ENCODE measurements at regions of chr16 and their contacts with region 1.

Region 1: GRCh38 chr16:10876799-10877341 is at the start of gene CIITA:
- DNase-seq: peak; percentile 97
- ATAC-seq: peak; percentile 56
- H3K4me3 ChIP-seq: peak within 1 kb of the TSS; percentile 78
- H3K27ac ChIP-seq: peak within 1 kb of the TSS; percentile 94
- H3K4me1 ChIP-seq: peaks cover 40% of the 10 kb centered on the region
- H3K27me3 ChIP-seq: no peaks in the 10 kb centered on the region
- CTCF ChIP-seq: no peak
- EP300 ChIP-seq: peak; percentile 28 to 85; a peak in 3 of 4 replicates
- POLR2A ChIP-seq: peak; percentile 86
- RAD21 ChIP-seq: peak; percentile 32; the same call in 1 of the 2 replicates
- polyA plus RNA-seq, gene CIITA: 11.5 to 12.5 TPM

Region 2: DNA sequence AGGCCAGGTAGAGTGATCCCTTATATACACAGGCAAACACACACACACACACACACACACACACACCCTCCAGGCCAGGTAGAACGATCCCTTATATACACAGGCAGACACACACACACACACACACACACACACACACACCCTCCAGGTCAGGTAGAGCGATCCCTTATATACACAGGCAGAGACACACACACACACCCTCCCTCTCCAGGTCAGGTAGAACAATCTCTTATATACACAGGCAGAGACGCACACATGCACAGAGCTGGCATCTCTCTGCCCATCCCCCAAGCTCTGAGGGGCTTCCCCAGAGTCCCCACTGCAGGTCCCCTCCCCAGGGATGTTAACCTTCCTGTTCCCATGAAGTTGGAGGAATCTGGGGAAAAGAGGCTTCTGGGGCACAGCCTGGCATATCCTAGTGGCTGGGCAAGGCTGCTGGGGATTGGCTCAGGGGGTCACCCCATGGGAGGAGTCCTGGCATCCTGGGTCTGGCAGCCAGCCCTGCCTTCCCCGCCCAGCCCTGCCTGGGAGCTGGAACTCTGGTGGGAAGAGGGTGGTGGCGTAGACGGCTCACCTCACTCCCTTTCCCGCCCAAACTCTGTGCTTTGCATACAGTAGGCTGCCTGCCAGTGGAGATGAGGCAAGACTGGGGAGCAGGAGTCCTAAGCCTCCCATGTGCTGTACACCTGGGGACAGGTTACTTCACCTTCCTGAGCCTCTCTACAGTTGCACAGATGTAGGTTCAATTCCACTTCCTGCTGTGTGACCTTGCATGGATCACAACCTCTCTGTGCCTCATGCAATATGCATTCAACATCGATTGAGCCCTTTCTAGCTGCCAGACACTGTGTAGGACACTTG is 223.9 kb before region 1 on chr16:
- CTCF ChIA-PET with region 1: no interaction called
- POLR2A ChIA-PET with region 1: no interaction called
- RAD21 ChIA-PET with region 1: no interaction called
- SMC1A ChIA-PET with region 1: no interaction called
- in situ Hi-C with region 1: no loop called
- intact Hi-C with region 1: no loop called
- DNase-seq: no peak
- ATAC-seq: no peak; the same call in 2 of the 3 replicates
- H3K4me3 ChIP-seq: no peak overlapping the region
- H3K27ac ChIP-seq: no peak overlapping the region
- H3K4me1 ChIP-seq: peaks cover 4% of the 10 kb centered on the region; the same call in 1 of the 2 replicates
- H3K27me3 ChIP-seq: no peaks in the 10 kb centered on the region
- CTCF ChIP-seq: no peak
- EP300 ChIP-seq: no peak
- POLR2A ChIP-seq: no peak
- RAD21 ChIP-seq: no peak

Region 3: DNA sequence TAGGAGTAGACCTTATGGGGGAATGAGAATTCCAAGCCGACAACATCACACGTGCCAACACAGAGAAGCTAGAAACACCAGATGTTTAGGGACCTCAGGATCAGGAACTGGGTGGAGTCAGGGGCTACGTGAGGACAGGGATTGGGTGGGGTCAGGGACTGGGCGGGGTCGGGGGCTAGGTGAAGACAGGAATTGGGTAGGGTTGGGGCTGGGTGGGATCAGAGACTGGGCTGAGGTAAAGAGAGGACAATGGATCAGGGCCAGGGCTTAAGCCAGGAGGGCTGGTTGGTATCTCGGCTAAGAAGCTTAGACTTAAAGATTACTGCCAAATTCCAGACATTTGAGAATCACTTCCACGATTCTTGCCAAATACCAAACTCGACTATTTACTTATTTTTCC is 193.7 kb before region 1 on chr16:
- CTCF ChIA-PET with region 1: no interaction called
- POLR2A ChIA-PET with region 1: no interaction called
- RAD21 ChIA-PET with region 1: no interaction called
- SMC1A ChIA-PET with region 1: no interaction called
- in situ Hi-C with region 1: no loop called
- intact Hi-C with region 1: no loop called
- DNase-seq: no peak
- ATAC-seq: no peak
- H3K4me3 ChIP-seq: no peak overlapping the region
- H3K27ac ChIP-seq: no peak overlapping the region
- H3K4me1 ChIP-seq: no peaks in the 10 kb centered on the region
- H3K27me3 ChIP-seq: peaks cover 0 to 5% of the 10 kb centered on the region in 2 experiments; a peak in 3 of 4 replicates
- CTCF ChIP-seq: no peak
- EP300 ChIP-seq: no peak
- POLR2A ChIP-seq: no peak
- RAD21 ChIP-seq: no peak

Region 4: GRCh38 chr16:10752843-10753523 is 123.9 kb before region 1 on chr16:
- CTCF ChIA-PET with region 1: interaction called, 5 read pairs
- POLR2A ChIA-PET with region 1: interaction called, 4 read pairs
- RAD21 ChIA-PET with region 1: interaction called, 21 read pairs
- SMC1A ChIA-PET with region 1: interaction called, 13 read pairs
- in situ Hi-C with region 1: no loop called
- intact Hi-C with region 1: no loop called
- DNase-seq: peak; percentile 74
- ATAC-seq: peak; percentile 90
- H3K4me3 ChIP-seq: 0 out of 2 replicates have a peak overlapping the region, but pooled peaks have one; percentile 2
- H3K27ac ChIP-seq: peak overlapping the region; percentile 49
- H3K4me1 ChIP-seq: peaks cover 31% of the 10 kb centered on the region
- H3K27me3 ChIP-seq: no peaks in the 10 kb centered on the region
- CTCF ChIP-seq: no peak
- EP300 ChIP-seq: peak in 1 of 2 experiments; percentile 72; a peak in 2 of 4 replicates
- POLR2A ChIP-seq: no peak
- RAD21 ChIP-seq: no peak

Region 5: DNA sequence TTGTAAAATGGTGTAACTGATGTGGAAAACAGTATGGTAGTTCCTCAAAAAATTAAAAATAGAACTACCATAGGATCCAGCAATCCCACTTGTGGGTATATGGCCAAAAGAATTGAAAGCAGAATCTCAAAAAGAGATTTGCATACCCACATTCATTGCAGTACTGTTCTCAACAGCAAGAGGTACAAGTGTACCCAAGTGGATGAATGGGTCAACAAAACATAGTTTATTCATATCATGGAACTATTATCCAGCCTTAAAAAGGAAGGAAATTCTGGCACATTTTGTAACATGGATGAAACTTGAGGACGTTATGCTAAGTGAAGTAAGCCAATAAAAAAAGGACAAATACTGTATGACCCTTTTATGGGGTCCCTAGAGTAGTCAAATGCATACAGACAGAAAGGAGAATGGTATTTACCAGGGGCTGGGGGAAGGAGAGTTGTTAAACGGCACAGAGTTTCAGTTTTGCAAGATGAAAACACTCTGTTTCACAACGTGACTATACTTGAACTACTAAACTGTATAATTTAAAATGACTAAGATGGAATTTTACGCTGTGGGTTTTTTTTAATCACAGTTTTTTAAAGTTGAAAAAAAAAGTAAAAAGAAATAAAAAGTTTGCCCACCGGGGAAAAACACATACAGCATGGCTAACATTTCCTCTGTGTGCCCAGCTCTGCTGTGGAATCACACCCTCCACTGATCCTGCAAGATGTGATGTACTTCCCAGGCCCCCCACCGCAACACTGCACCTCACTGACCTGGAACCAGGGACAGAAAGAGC is 64.4 kb before region 1 on chr16:
- CTCF ChIA-PET with region 1: interaction called, 7 read pairs
- POLR2A ChIA-PET with region 1: interaction called, 4 read pairs
- RAD21 ChIA-PET with region 1: interaction called, 5 read pairs
- SMC1A ChIA-PET with region 1: interaction called, 23 read pairs
- in situ Hi-C with region 1: no loop called
- intact Hi-C with region 1: loop called (anchors 2 kb)
- DNase-seq: peak; percentile 57
- ATAC-seq: peak; percentile 90
- H3K4me3 ChIP-seq: no peak overlapping the region
- H3K27ac ChIP-seq: peak overlapping the region; percentile 84
- H3K4me1 ChIP-seq: peaks cover 43% of the 10 kb centered on the region
- H3K27me3 ChIP-seq: no peaks in the 10 kb centered on the region
- CTCF ChIP-seq: peak; percentile 8 to 25 (median 23); a peak in 3 of 6 replicates
- EP300 ChIP-seq: peak; percentile 70 to 96; a peak in 3 of 4 replicates
- POLR2A ChIP-seq: no peak
- RAD21 ChIP-seq: peak; percentile 17; the same call in 1 of the 2 replicates

Region 6: DNA sequence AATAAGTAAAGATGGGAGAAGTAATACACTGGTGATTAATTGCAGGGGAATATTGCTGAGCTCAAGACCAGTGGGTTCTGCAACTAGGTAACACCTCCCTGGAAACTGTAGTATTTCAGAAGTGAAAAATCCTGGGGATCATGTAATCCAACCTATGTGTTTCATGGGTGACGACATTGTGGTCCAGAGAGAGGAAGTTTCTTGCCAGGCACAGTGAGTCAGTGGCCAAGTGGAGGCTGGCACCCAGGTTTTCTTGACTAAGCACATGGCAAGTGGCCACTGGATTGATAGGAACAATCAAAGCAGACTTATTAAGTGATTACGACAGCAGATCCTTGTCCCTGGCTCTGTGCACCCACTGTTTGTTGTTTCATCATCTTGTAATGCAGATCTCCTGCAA is 14.4 kb before region 1 on chr16:
- CTCF ChIA-PET with region 1: interaction called, 6 read pairs
- POLR2A ChIA-PET with region 1: interaction called, 32 read pairs
- RAD21 ChIA-PET with region 1: interaction called, 48 read pairs
- SMC1A ChIA-PET with region 1: interaction called, 36 read pairs
- in situ Hi-C with region 1: no loop called
- intact Hi-C with region 1: no loop called
- DNase-seq: no peak
- ATAC-seq: peak; percentile 28
- H3K4me3 ChIP-seq: no peak overlapping the region
- H3K27ac ChIP-seq: no peak overlapping the region
- H3K4me1 ChIP-seq: peaks cover 17% of the 10 kb centered on the region
- H3K27me3 ChIP-seq: no peaks in the 10 kb centered on the region
- CTCF ChIP-seq: no peak
- EP300 ChIP-seq: no peak
- POLR2A ChIP-seq: no peak
- RAD21 ChIP-seq: no peak

Region 7: DNA sequence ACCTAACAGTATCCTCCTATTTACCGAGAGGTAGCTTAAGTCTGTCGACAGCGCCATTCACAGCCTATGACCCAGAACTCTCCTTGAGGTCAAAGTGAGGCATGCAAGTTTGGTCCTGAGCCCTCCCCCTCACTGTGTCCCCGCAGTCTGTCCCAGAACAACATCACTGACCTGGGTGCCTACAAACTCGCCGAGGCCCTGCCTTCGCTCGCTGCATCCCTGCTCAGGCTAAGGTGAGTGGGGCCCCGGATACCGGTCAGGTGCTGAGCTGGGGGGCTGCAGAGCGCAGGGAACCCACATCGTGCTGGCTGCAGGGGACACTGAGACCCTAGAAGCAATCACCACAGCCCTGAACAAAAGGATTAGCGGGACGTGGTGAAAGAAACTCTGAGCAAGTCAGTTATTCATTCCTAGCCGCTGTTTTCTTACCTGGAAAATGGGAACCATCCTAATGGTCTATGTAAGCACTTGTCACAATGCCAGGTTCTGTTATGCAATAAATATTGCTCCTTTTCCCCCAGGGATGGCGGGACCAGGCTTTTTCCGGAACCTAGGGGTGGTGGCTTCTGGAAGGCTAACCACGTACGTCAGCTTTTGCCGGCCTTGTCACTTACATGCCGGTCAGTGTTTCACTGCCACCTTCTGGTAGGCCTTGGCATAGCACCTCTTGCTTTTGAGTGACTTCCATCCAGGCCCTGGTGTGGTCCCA is 41.6 kb after region 1 on chr16:
- CTCF ChIA-PET with region 1: interaction called, 91 read pairs
- POLR2A ChIA-PET with region 1: interaction called, 8 read pairs
- RAD21 ChIA-PET with region 1: interaction called, 87 read pairs
- SMC1A ChIA-PET with region 1: interaction called, 79 read pairs
- in situ Hi-C with region 1: no loop called
- intact Hi-C with region 1: loop called (anchors 1 kb)
- DNase-seq: peak; percentile 77
- ATAC-seq: peak; percentile 89
- H3K4me3 ChIP-seq: no peak overlapping the region
- H3K27ac ChIP-seq: peak overlapping the region; percentile 4; the same call in 1 of the 2 replicates
- H3K4me1 ChIP-seq: peaks cover 25% of the 10 kb centered on the region
- H3K27me3 ChIP-seq: no peaks in the 10 kb centered on the region
- CTCF ChIP-seq: peak; percentile 91 to 99 (median 99)
- EP300 ChIP-seq: no peak
- POLR2A ChIP-seq: peak; percentile 50; the same call in 1 of the 2 replicates
- RAD21 ChIP-seq: peak; percentile 97

Region 8: DNA sequence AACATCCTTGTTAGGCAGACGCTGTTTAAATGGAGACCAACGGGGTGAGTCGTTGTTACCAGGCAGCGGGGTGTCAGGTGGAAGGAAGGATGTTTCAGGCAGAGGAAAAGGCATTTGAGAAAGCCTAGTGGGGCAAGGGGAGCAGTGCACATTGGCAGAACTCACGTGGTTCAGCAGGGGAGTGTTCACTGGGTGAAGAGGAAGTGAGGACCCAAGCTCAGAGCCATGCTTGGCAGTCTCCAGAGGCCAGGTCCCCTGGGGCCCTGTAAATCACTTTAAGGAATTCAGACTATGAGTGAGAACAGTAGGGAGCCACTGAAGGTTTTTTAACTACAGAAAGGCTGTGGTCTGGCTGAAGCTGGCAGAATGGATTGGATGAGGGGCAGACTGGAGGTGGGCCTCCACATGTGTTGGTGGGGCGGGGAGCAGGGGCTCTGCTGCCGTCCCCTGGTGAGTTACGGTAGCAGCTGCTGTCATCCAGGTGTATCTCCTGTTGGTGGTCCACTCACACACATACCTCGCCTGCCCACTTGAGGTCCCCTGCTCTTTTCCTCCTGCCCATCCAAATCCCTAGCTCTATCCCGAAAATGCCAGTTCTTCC is 72.6 kb after region 1 on chr16:
- CTCF ChIA-PET with region 1: interaction called, 8 read pairs
- POLR2A ChIA-PET with region 1: interaction called, 4 read pairs
- RAD21 ChIA-PET with region 1: interaction called, 20 read pairs
- SMC1A ChIA-PET with region 1: interaction called, 20 read pairs
- in situ Hi-C with region 1: no loop called
- intact Hi-C with region 1: no loop called
- DNase-seq: peak; percentile 91
- ATAC-seq: peak; percentile 83
- H3K4me3 ChIP-seq: peak overlapping the region; percentile 28; the same call in 1 of the 2 replicates
- H3K27ac ChIP-seq: peak overlapping the region; percentile 62
- H3K4me1 ChIP-seq: peaks cover 27% of the 10 kb centered on the region
- H3K27me3 ChIP-seq: no peaks in the 10 kb centered on the region
- CTCF ChIP-seq: peak; percentile 34 to 55 (median 49); a peak in 2 of 6 replicates
- EP300 ChIP-seq: peak; percentile 9 to 33; a peak in 1 of 4 replicates
- POLR2A ChIP-seq: no peak
- RAD21 ChIP-seq: no peak

Region 9: GRCh38 chr16:11051879-11052808 is 175.3 kb after region 1 on chr16:
- CTCF ChIA-PET with region 1: no interaction called
- POLR2A ChIA-PET with region 1: no interaction called
- RAD21 ChIA-PET with region 1: no interaction called
- SMC1A ChIA-PET with region 1: no interaction called
- in situ Hi-C with region 1: no loop called
- intact Hi-C with region 1: no loop called
- DNase-seq: peak; percentile 61
- ATAC-seq: peak; percentile 81
- H3K4me3 ChIP-seq: no peak overlapping the region
- H3K27ac ChIP-seq: peak overlapping the region; percentile 18; the same call in 1 of the 2 replicates
- H3K4me1 ChIP-seq: peaks cover 25% of the 10 kb centered on the region
- H3K27me3 ChIP-seq: no peaks in the 10 kb centered on the region
- CTCF ChIP-seq: 0 out of 6 replicates have a peak, but pooled peaks of 1 of the 3 experiments have one; percentile 5
- EP300 ChIP-seq: no peak
- POLR2A ChIP-seq: no peak
- RAD21 ChIP-seq: 0 out of 2 replicates have a peak, but pooled peaks have one; percentile 9

Region 10: DNA sequence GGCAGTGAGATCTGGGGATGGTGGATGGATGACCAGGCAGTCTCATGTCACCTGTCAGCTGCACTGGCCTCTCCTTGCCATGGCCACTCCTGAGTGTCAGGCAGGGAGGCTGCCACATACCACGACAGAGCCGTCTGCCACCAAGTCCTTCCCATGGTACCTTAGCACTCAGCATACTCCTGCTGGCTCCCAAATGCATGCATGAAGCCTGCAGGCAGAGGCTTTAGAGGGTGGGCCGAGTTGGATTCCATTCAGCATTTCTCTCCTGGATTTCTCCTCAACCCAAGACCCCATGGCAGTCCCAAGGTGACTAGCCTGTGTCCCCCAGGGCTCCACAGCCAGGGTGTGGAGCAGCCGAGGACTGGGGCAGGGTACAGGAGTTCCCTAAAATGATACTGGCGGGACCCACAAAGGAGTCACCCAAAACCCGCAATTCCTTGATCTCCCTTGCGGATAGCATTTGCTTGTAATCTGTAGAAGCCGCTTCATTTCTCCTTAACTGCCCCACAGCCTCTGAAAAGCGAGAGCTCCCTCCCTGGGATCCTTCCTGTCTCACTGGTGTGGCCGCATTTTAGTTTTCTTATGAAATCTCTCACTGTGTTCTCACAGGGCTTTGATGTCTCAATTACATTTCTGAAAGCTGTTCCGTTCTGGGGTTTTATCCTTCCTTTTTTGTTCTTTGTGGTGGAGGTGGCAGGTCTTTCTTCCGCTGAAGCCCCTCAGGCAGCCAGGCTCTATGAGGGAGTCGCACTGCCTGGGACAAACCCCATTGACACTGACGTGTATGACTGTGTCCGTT is 237.7 kb after region 1 on chr16:
- CTCF ChIA-PET with region 1: no interaction called
- POLR2A ChIA-PET with region 1: no interaction called
- RAD21 ChIA-PET with region 1: no interaction called
- SMC1A ChIA-PET with region 1: no interaction called
- in situ Hi-C with region 1: no loop called
- intact Hi-C with region 1: no loop called
- DNase-seq: no peak
- ATAC-seq: no peak
- H3K4me3 ChIP-seq: no peak overlapping the region
- H3K27ac ChIP-seq: peak overlapping the region; percentile 52
- H3K4me1 ChIP-seq: peaks cover 39% of the 10 kb centered on the region
- H3K27me3 ChIP-seq: no peaks in the 10 kb centered on the region
- CTCF ChIP-seq: no peak
- EP300 ChIP-seq: no peak
- POLR2A ChIP-seq: no peak
- RAD21 ChIP-seq: no peak

Measured in GM12878 (cell line).